CD4-positive, alpha-beta memory T cell (primary cell): ENCODE measurements at regions of chr1 and their contacts with region 1.

Region 1: DNA sequence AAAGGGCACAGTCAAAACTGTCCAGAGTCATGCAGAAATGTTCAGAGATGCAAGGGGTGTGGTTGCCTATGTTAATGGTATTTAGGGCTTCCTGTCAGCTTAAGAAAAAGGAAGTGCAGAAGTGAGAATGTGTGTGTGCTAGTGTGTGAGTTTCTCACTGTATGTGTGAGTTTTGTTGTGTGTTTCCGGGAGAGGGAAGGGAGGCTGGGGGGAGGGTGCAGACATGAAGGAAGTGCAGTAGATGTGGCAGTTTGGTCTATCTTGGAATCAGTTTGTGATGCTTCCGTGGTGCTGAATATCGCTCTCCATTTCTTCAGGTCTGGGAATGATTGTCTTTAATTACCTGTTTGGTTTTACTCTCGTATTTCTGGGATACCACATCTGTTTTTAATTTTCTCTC is 16.5 kb upstream of the ATP6V1G3 start:
- DNase-seq: peak; percentile 80 to 85 (median 83)
- H3K4me3 ChIP-seq: peak overlapping the region in 1 of 2 donors; percentile 30
- H3K4me3 Mint-ChIP-seq: peak overlapping the region; percentile 61 to 84 (median 74)
- H3K27ac ChIP-seq: no peak overlapping the region
- H3K27ac Mint-ChIP-seq: peak overlapping the region; percentile 9 to 80 (median 47)
- H3K4me1 ChIP-seq: peaks cover 80% of the 10 kb centered on the region
- H3K4me1 Mint-ChIP-seq: peaks cover 57 to 90% (median 71%) of the 10 kb centered on the region in 4 donors
- H3K27me3 ChIP-seq: no peaks in the 10 kb centered on the region
- H3K27me3 Mint-ChIP-seq: no peaks in the 10 kb centered on the region

Region 2: GRCh38 chr1:198481661-198482060 is 75.3 kb before region 1 on chr1:
- CTCF ChIA-PET with region 1: no interaction called
- POLR2A ChIA-PET with region 1: no interaction called
- intact Hi-C with region 1: no loop called
- DNase-seq: no peak
- H3K4me3 ChIP-seq: no peak overlapping the region
- H3K4me3 Mint-ChIP-seq: no peak overlapping the region
- H3K27ac ChIP-seq: no peak overlapping the region
- H3K27ac Mint-ChIP-seq: no peak overlapping the region
- H3K4me1 ChIP-seq: no peaks in the 10 kb centered on the region
- H3K4me1 Mint-ChIP-seq: peaks cover 0 to 1% (median 0%) of the 10 kb centered on the region in 4 donors
- H3K27me3 ChIP-seq: no peaks in the 10 kb centered on the region
- H3K27me3 Mint-ChIP-seq: no peaks in the 10 kb centered on the region

Region 3: GRCh38 chr1:198534548-198535418 is 22.2 kb before region 1 on chr1:
- CTCF ChIA-PET with region 1: interaction called, 3 read pairs
- POLR2A ChIA-PET with region 1: interaction called, 10 read pairs
- intact Hi-C with region 1: no loop called
- DNase-seq: no peak
- H3K4me3 ChIP-seq: peak overlapping the region in 1 of 2 donors; percentile 28
- H3K4me3 Mint-ChIP-seq: peak overlapping the region; percentile 65 to 83 (median 77)
- H3K27ac ChIP-seq: peak overlapping the region; percentile 49
- H3K27ac Mint-ChIP-seq: peak overlapping the region; percentile 29 to 90 (median 86)
- H3K4me1 ChIP-seq: peaks cover 59% of the 10 kb centered on the region
- H3K4me1 Mint-ChIP-seq: peaks cover 51 to 78% (median 61%) of the 10 kb centered on the region in 4 donors
- H3K27me3 ChIP-seq: no peaks in the 10 kb centered on the region
- H3K27me3 Mint-ChIP-seq: no peaks in the 10 kb centered on the region

Region 4: DNA sequence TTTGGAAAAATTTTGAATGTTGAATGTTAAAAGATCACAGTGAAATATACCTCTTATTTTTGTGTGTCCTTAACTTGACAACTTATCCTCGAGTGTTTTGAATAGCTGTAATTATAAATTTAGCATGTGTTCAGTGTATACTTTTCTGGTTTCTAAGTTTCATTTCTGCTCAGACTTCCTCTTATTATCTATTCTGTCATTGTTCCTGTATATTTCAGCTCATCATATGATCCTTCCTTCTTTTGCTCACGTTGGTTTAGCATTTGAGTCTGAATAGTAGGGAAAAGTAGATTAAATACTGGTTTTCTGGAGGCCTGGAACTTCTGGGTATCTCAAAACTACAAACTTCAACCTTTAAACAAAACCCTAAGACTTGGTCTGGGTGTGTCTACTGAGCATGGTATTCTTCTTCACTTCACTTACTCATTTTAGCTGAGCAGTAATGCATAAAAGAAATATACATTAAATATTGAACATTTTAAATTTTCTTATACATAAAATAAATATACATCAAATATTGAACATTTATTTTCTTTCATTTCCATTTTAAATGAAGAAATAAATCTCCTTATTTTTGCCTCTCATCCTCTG is 13.2 kb before region 1 on chr1:
- CTCF ChIA-PET with region 1: no interaction called
- POLR2A ChIA-PET with region 1: interaction called, 9 read pairs
- intact Hi-C with region 1: loop called (anchors 1 kb)
- DNase-seq: no peak
- H3K4me3 ChIP-seq: no peak overlapping the region
- H3K4me3 Mint-ChIP-seq: peak overlapping the region in 5 of 8 donors; percentile 23 to 65 (median 30)
- H3K27ac ChIP-seq: no peak overlapping the region
- H3K27ac Mint-ChIP-seq: peak overlapping the region in 4 of 7 donors; percentile 24 to 84 (median 55)
- H3K4me1 ChIP-seq: peaks cover 22% of the 10 kb centered on the region
- H3K4me1 Mint-ChIP-seq: peaks cover 27 to 47% (median 37%) of the 10 kb centered on the region in 4 donors
- H3K27me3 ChIP-seq: no peaks in the 10 kb centered on the region
- H3K27me3 Mint-ChIP-seq: no peaks in the 10 kb centered on the region

Region 5: GRCh38 chr1:198598796-198599321 is 41.9 kb after region 1 on chr1:
- CTCF ChIA-PET with region 1: no interaction called
- POLR2A ChIA-PET with region 1: interaction called, 7 read pairs
- intact Hi-C with region 1: loop called (anchors 5 kb)
- DNase-seq: no peak
- H3K4me3 ChIP-seq: no peak overlapping the region
- H3K4me3 Mint-ChIP-seq: peak overlapping the region; percentile 16 to 78 (median 60)
- H3K27ac ChIP-seq: no peak overlapping the region
- H3K27ac Mint-ChIP-seq: peak overlapping the region in 6 of 7 donors; percentile 69 to 92 (median 78)
- H3K4me1 ChIP-seq: peaks cover 57% of the 10 kb centered on the region
- H3K4me1 Mint-ChIP-seq: peaks cover 48 to 80% (median 63%) of the 10 kb centered on the region in 4 donors
- H3K27me3 ChIP-seq: no peaks in the 10 kb centered on the region
- H3K27me3 Mint-ChIP-seq: no peaks in the 10 kb centered on the region

Region 6: DNA sequence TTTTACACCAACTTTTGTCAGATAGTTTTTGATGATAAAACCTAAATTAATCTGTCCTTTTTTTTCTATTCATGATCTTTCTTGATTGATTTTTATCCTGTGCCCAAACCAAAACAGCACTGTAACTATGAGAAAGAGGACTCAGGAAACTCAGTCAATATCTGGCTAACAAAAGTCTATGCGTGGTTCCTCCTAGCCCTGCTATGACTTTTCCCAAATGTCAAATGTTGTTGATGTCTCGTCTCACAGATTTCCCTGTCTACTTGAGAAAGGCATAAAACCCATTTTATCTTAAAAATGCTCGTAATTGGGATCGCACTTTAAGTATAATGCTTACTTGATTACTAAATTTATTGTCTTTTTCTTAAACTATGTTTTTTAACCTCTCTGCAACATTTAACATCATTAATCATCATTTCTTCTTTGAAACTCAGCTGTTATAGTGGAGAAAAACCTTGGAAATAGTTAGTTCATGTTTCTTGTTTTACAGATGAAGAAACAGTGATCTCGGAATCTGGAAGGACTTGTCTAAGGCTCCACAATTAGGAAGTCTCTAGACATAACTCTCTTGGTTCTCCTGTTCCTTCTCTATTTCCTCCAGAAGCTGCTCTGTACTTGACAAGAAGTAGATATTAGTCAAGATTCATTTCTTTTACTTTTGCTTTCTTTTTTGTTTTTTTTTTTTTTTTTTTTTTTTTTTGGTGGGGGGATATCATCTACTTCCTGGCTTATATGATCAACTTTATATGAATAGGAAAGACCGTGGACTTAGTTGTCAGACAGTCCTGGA is 55.7 kb after region 1 on chr1:
- CTCF ChIA-PET with region 1: interaction called, 4 read pairs
- POLR2A ChIA-PET with region 1: interaction called, 13 read pairs
- intact Hi-C with region 1: loop called (anchors 5 kb)
- DNase-seq: peak in 3 of 5 donors; percentile 36 to 48 (median 43)
- H3K4me3 ChIP-seq: peak overlapping the region; percentile 20 to 23
- H3K4me3 Mint-ChIP-seq: peak overlapping the region; percentile 67 to 92 (median 82)
- H3K27ac ChIP-seq: peak overlapping the region; percentile 81
- H3K27ac Mint-ChIP-seq: peak overlapping the region; percentile 92 to 99 (median 98)
- H3K4me1 ChIP-seq: peaks cover 94% of the 10 kb centered on the region
- H3K4me1 Mint-ChIP-seq: peaks cover 58 to 75% (median 64%) of the 10 kb centered on the region in 4 donors
- H3K27me3 ChIP-seq: no peaks in the 10 kb centered on the region
- H3K27me3 Mint-ChIP-seq: no peaks in the 10 kb centered on the region

Region 7: DNA sequence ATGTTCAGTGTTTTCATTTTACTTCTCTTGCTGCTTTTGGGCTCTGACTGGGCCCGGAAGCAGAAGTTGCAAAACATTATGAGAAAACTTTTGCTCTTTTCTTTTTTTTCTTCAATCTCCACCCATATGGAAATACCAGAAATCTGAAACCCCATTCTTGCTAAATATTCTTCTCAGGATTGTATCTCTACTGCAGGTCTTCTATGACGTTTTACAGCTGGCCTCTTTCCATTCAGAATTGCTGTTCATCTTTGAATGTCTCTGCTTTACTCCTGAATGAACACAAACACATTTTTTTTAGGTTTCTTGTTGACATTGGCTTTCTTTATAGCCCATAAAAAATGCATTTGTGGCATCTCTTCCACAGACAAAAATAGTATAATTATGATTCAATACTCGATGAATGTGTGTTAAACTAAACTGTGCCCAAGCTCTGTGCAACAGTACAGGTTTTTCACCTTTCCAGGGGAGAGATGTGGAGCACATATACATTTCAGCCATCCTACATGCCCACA is 100.6 kb after region 1 on chr1:
- CTCF ChIA-PET with region 1: no interaction called
- POLR2A ChIA-PET with region 1: interaction called, 10 read pairs
- intact Hi-C with region 1: no loop called
- DNase-seq: peak; percentile 58 to 73 (median 65)
- H3K4me3 ChIP-seq: peak overlapping the region; percentile 22 to 33
- H3K4me3 Mint-ChIP-seq: peak overlapping the region; percentile 59 to 87 (median 79)
- H3K27ac ChIP-seq: peak overlapping the region; percentile 93
- H3K27ac Mint-ChIP-seq: peak overlapping the region; percentile 96 to 99 (median 98)
- H3K4me1 ChIP-seq: peaks cover 91% of the 10 kb centered on the region
- H3K4me1 Mint-ChIP-seq: peaks cover 43 to 65% (median 58%) of the 10 kb centered on the region in 4 donors
- H3K27me3 ChIP-seq: no peaks in the 10 kb centered on the region
- H3K27me3 Mint-ChIP-seq: no peaks in the 10 kb centered on the region